ENCODE measurements at regions of chr15 and their contacts with region 1.

Region 1: GRCh38 chr15:99213187-99213811 is 36.1 kb downstream of the TTC23 start:
- DNase-seq: peak; percentile 21 to 63 (median 51)
- ATAC-seq: peak; percentile 62
- H3K4me3 ChIP-seq: no peak overlapping the region
- H3K4me3 Mint-ChIP-seq: no peak overlapping the region
- H3K27ac ChIP-seq: no peak overlapping the region
- H3K27ac Mint-ChIP-seq: no peak overlapping the region
- H3K4me1 ChIP-seq: no peaks in the 10 kb centered on the region
- H3K4me1 Mint-ChIP-seq: no peaks in the 10 kb centered on the region
- H3K27me3 ChIP-seq: no peaks in the 10 kb centered on the region
- H3K27me3 Mint-ChIP-seq: peaks cover 12% of the 10 kb centered on the region
- CTCF ChIP-seq: peak; percentile 90

Region 2: GRCh38 chr15:98442379-98442833 is 770.9 kb before region 1 on chr15:
- CTCF ChIA-PET with region 1: no interaction called
- POLR2A ChIA-PET with region 1: no interaction called
- intact Hi-C with region 1: loop called in 1 of 2 experiments (anchors 5 kb)
- DNase-seq: peak in 7 of 9 experiments; percentile 31 to 64 (median 54)
- ATAC-seq: peak; percentile 79
- H3K4me3 ChIP-seq: no peak overlapping the region
- H3K4me3 Mint-ChIP-seq: no peak overlapping the region
- H3K27ac ChIP-seq: no peak overlapping the region
- H3K27ac Mint-ChIP-seq: no peak overlapping the region
- H3K4me1 ChIP-seq: no peaks in the 10 kb centered on the region
- H3K4me1 Mint-ChIP-seq: no peaks in the 10 kb centered on the region
- H3K27me3 ChIP-seq: no peaks in the 10 kb centered on the region
- H3K27me3 Mint-ChIP-seq: peaks cover 6% of the 10 kb centered on the region
- CTCF ChIP-seq: peak; percentile 60

Region 3: DNA sequence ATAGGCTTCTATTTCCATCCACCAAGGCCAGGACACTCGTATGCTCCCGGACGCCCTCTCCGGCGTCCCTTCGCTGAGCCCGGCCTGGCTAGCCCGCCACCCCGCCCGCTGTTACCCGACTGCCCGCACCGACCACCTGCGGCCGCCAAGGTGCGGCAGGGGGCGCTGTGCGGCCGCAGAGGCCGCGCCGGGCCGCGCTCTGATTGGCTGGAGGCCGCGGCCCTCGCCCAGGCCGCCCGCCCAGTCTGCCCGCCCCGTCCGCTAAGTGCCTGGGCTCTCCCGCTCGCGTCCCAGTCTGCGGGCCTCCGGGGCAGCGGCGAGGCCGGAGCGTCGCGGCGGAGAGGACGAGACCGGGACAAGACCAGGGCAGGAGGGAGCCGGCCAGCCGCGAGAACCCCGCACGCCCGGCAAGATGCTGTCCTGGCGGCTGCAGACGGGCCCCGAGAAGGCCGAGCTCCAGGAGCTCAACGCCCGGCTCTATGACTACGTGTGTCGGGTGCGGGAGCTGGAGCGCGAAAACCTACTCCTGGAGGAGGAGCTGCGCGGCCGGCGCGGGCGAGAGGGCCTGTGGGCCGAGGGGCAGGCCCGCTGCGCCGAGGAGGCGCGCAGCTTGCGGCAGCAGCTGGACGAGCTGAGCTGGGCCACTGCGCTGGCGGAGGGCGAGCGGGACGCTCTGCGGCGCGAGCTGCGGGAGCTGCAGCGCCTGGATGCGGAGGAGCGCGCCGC is 108.3 kb before region 1 on chr15 and contains the start of gene SYNM:
- CTCF ChIA-PET with region 1: interaction called, 20 read pairs
- POLR2A ChIA-PET with region 1: no interaction called
- intact Hi-C with region 1: loop called (anchors 1 to 2 kb)
- DNase-seq: peak in 2 of 9 experiments; percentile 49 to 60
- ATAC-seq: peak; percentile 15
- H3K4me3 ChIP-seq: peak within 1 kb of the TSS in 1 of 2 experiments; percentile 34
- H3K4me3 Mint-ChIP-seq: peak within 1 kb of the TSS; percentile 61
- H3K27ac ChIP-seq: peak within 1 kb of the TSS in 1 of 2 experiments; percentile 43
- H3K27ac Mint-ChIP-seq: peak within 1 kb of the TSS; percentile 45
- H3K4me1 ChIP-seq: no peaks in the 10 kb centered on the region
- H3K4me1 Mint-ChIP-seq: peaks cover 19% of the 10 kb centered on the region
- H3K27me3 ChIP-seq: peaks cover 0 to 5% of the 10 kb centered on the region in 2 experiments
- H3K27me3 Mint-ChIP-seq: peaks cover 33% of the 10 kb centered on the region
- CTCF ChIP-seq: no peak
- total RNA-seq, gene SYNM: 3.3 to 3.9 TPM

Region 4: DNA sequence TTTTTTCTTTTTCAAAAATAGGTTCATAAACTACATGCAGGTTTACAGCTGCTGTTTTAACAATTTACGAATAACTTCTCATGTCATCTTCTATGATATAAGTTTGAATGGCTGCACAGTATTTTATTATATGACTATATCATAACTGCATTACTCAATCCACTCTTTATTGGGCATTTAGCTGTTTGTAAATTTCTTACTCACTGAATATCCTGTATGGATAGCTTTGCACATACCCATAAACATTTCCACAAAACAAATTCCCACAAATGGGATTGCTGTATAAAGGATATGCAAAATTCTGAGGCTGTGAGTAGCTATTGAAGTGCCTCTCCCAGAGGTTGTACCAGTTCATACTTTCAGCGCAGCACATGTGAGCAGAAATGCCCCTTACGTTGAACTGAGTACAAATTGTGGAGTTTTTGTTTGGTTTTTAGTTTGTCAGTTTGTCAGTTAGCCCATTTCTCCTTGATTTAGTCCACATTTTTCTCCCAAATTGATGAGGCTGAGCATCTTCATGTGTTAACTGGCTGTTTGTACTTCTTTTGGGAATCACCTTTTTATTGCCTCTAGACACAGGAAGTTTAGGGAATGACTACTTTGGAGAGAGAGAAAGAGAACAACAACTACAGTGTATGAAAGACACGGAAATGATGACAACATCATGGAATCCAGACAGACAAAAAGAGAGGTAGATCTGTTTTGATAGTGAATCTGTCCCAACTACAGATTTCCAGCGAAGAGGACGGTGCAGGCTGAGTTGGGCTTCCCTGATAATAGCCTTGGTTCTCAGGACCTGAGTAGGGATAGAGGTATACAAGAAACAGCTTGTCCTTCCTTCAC is 11.3 kb after region 1 on chr15:
- CTCF ChIA-PET with region 1: interaction called, 17 read pairs
- POLR2A ChIA-PET with region 1: no interaction called
- intact Hi-C with region 1: no loop called
- DNase-seq: no peak
- ATAC-seq: no peak
- H3K4me3 ChIP-seq: no peak overlapping the region
- H3K4me3 Mint-ChIP-seq: no peak overlapping the region
- H3K27ac ChIP-seq: no peak overlapping the region
- H3K27ac Mint-ChIP-seq: no peak overlapping the region
- H3K4me1 ChIP-seq: no peaks in the 10 kb centered on the region
- H3K4me1 Mint-ChIP-seq: no peaks in the 10 kb centered on the region
- H3K27me3 ChIP-seq: no peaks in the 10 kb centered on the region
- H3K27me3 Mint-ChIP-seq: peaks cover 7% of the 10 kb centered on the region
- CTCF ChIP-seq: no peak